ENCODE measurements at regions of chr9 and their contacts with region 1.

Region 1: DNA sequence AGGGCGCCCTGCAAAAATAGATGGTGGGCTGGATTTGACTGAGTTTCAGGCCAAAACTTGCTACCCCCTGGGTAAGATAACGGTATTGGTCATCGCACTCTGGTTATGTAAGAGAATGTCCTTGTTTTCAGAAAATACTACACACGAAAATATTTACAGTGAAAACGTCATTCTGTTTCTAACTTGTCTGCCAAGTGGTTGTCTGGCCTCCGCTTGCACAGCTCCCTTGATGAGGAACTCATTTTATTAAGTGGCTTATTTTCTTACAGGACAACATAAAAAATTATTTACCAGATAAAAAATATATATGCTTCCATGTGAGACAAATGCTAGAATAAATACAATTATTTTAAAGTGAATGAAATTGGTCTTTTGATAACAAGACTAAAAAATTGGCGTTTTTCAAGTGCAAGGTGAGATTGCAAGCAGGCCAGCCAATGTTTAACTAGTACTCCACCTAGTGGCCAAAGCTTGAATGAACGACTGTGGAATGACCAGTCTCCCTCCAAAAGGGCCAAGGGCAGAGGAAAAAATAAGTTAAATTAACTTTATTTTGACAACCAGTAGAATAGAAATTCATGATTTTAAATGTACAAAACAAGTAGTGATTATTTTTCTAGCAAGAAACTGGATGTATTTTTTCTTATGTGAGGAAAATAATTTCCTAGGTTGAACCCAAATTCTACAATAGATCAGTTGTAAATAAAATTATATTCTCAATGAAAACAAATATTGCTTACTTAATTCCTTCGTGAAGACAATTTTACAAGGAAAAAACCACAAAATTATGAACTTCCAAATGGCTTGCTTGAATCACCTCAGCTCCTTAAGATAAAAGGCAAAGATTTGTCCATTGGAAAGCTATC is 93.2 kb downstream of the ZFAND5 start:
- DNase-seq: no peak
- ATAC-seq: peak in 3 of 4 donors; percentile 60 to 81 (median 62)
- H3K4me3 ChIP-seq: no peak overlapping the region
- H3K27ac ChIP-seq: no peak overlapping the region
- H3K4me1 ChIP-seq: no peaks in the 10 kb centered on the region
- H3K27me3 ChIP-seq: no peaks in the 10 kb centered on the region
- CTCF ChIP-seq: peak; percentile 90

Region 2: GRCh38 chr9:71806901-71807307 is 464.9 kb before region 1 on chr9:
- intact Hi-C with region 1: loop called (anchors 10 kb)
- DNase-seq: peak; percentile 44 to 68
- ATAC-seq: peak; percentile 92 to 99 (median 98)
- H3K4me3 ChIP-seq: no peak overlapping the region
- H3K27ac ChIP-seq: peak overlapping the region; percentile 11
- H3K4me1 ChIP-seq: peaks cover 7% of the 10 kb centered on the region
- H3K27me3 ChIP-seq: no peaks in the 10 kb centered on the region
- CTCF ChIP-seq: peak; percentile 94

Region 3: GRCh38 chr9:72210522-72210921 is 61.3 kb before region 1 on chr9:
- intact Hi-C with region 1: no loop called
- DNase-seq: no peak
- ATAC-seq: no peak
- H3K4me3 ChIP-seq: no peak overlapping the region
- H3K27ac ChIP-seq: no peak overlapping the region
- H3K4me1 ChIP-seq: no peaks in the 10 kb centered on the region
- H3K27me3 ChIP-seq: no peaks in the 10 kb centered on the region
- CTCF ChIP-seq: no peak

Region 4: GRCh38 chr9:72615931-72616330 is 344.1 kb after region 1 on chr9:
- intact Hi-C with region 1: no loop called
- DNase-seq: no peak
- ATAC-seq: no peak
- H3K4me3 ChIP-seq: no peak overlapping the region
- H3K27ac ChIP-seq: no peak overlapping the region
- H3K4me1 ChIP-seq: no peaks in the 10 kb centered on the region
- H3K27me3 ChIP-seq: no peaks in the 10 kb centered on the region
- CTCF ChIP-seq: no peak